RWPE1 (cell line): ENCODE measurements at regions of chr22 and their contacts with region 1.

Region 1: GRCh38 chr22:35840302-35840739 is 122.6 kb downstream of the APOL5 start:
- DNase-seq: peak; percentile 88
- H3K27ac ChIP-seq: peak overlapping the region; percentile 71
- CTCF ChIP-seq: no peak

Region 2: DNA sequence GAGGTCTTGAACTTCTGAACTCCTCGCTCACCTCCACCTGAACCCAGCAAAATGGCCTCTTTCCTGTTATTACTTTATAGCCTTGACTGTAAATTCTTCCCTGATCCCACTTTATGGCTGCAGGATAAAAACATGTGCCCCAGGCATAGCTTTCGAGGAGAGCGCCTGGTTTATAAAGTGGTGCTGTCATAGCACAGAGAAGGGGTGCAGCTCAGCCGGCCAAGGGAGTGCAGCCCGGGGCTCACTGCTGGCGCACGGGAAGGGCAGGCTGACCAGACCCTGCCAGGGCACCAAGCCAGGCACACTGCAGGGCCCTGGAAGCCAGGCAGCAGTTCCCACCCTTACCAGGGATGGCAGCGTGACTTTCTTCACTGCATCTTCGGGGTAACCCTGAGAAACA is 723.5 kb before region 1 on chr22:
- CTCF ChIA-PET with region 1: no interaction called
- POLR2A ChIA-PET with region 1: no interaction called
- DNase-seq: no peak
- H3K27ac ChIP-seq: no peak overlapping the region
- CTCF ChIP-seq: no peak

Region 3: GRCh38 chr22:35627264-35628041 is 212.9 kb before region 1 on chr22:
- CTCF ChIA-PET with region 1: no interaction called
- POLR2A ChIA-PET with region 1: interaction called, 11 read pairs
- DNase-seq: peak; percentile 57
- H3K27ac ChIP-seq: peak overlapping the region; percentile 97
- CTCF ChIP-seq: peak; percentile 76